GM12878 (cell line): ENCODE measurements at regions of chr1 and their contacts with region 1.

Region 1: DNA sequence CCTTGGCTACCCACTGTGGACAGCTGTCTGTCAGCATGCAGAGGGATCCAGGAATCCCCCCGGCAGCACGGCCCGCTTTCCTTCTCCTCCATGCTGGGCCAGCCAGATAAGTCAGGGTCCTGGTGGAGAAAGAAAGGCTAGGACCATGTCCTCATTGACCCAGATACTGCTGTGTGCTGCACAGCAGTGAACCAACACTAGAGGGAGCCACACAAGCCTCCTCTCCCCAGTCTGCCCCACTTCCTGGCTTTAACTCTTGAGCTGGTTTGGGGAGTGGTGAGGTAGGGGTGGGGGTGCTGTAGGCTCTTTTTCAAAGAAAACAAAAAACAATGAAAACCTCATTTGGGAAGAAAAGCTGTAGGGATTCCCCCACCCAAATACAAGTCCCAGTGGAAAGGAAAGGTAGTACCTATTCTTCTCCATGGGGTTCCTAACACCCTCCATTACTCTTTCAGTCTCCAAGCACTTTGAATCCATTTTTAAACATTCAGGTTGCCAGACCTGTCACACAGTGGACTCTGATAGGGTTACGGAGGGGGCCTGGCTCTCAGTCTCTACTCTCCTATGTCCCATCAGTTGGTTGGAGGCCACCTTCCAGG is 84.9 kb upstream of the CD1D start:
- DNase-seq: no peak
- ATAC-seq: peak; percentile 96
- H3K4me3 ChIP-seq: no peak overlapping the region
- H3K27ac ChIP-seq: no peak overlapping the region
- H3K4me1 ChIP-seq: no peaks in the 10 kb centered on the region
- H3K27me3 ChIP-seq: peaks cover 0 to 4% of the 10 kb centered on the region in 2 experiments; a peak in 3 of 4 replicates
- CTCF ChIP-seq: peak; percentile 52 to 81 (median 76)
- EP300 ChIP-seq: no peak
- POLR2A ChIP-seq: no peak
- RAD21 ChIP-seq: peak; percentile 57

Region 2: DNA sequence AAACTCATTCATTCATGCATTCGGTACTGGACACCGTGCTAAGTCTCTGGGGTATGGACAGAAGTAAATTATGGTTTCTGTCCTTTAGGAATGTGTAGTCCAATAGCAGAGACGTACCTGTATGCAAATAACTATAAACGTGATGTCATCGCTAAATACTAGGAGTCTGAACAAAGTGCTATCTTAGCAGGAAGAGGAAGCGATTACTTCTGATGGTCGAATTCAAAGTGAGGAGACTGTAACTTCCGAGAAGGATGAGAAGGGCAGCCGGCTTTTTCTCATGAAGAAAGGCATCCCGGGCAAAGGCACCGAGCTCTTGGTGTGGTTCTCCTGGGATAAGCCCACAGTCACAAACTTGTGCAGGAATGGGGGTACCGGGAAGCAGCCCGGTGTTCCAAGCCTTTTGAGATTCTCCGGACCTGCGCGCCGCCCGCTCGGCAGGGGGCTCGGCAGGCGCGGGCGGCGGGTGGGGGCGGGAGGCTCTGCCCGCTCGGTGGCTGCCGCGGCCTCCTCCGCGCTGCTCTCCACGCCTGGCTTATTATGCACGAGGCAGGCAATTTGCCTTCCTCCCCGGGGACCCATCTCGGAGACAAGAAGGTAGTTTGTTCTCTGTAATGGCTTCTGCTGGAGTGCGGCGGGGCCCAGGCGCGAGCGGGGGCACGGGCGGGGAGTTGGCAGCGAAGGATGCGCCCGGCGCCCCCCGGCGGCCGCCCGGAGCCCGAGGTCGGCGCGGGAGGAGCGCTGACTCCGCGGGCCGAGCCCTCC is 17.3 kb after region 1 on chr1:
- CTCF ChIA-PET with region 1: interaction called, 210 read pairs
- POLR2A ChIA-PET with region 1: no interaction called
- RAD21 ChIA-PET with region 1: interaction called, 4 read pairs
- SMC1A ChIA-PET with region 1: interaction called, 7 read pairs
- in situ Hi-C with region 1: no loop called
- intact Hi-C with region 1: no loop called
- DNase-seq: no peak
- ATAC-seq: peak; percentile 12; the same call in 1 of the 3 replicates
- H3K4me3 ChIP-seq: no peak overlapping the region
- H3K27ac ChIP-seq: no peak overlapping the region
- H3K4me1 ChIP-seq: no peaks in the 10 kb centered on the region
- H3K27me3 ChIP-seq: peaks cover 5 to 19% of the 10 kb centered on the region in 2 experiments
- CTCF ChIP-seq: no peak
- EP300 ChIP-seq: no peak
- POLR2A ChIP-seq: no peak
- RAD21 ChIP-seq: no peak

Region 3: DNA sequence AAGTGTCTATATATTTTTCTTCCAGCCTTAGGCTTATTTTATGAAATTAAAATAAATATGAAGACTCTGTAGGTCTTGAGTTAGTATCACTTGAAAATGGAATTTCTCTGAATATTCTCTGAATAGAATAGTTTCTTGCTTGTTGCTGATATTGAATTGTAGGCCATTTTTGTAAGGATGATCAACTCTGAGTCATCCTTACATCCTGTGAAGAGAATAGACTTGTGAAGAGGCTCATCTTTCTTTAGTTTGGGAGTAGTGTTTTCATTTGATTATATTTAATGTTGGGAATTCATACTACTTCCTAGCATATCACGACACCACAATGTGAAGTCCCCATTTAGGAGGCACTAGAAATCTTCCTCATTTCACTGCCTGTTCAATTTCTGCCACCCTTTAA is 57.3 kb after region 1 on chr1:
- CTCF ChIA-PET with region 1: no interaction called
- POLR2A ChIA-PET with region 1: no interaction called
- RAD21 ChIA-PET with region 1: no interaction called
- SMC1A ChIA-PET with region 1: no interaction called
- in situ Hi-C with region 1: no loop called
- intact Hi-C with region 1: no loop called
- DNase-seq: no peak
- ATAC-seq: no peak
- H3K4me3 ChIP-seq: no peak overlapping the region; the same call in 1 of the 2 replicates
- H3K27ac ChIP-seq: no peak overlapping the region
- H3K4me1 ChIP-seq: peaks cover 19% of the 10 kb centered on the region
- H3K27me3 ChIP-seq: no peaks in the 10 kb centered on the region
- CTCF ChIP-seq: no peak
- EP300 ChIP-seq: no peak
- POLR2A ChIP-seq: no peak
- RAD21 ChIP-seq: no peak

Region 4: GRCh38 chr1:158353303-158354075 is 257.7 kb after region 1 on chr1 and contains the start of gene CD1E:
- CTCF ChIA-PET with region 1: no interaction called
- POLR2A ChIA-PET with region 1: no interaction called
- RAD21 ChIA-PET with region 1: no interaction called
- SMC1A ChIA-PET with region 1: no interaction called
- in situ Hi-C with region 1: no loop called
- intact Hi-C with region 1: no loop called
- DNase-seq: no peak
- ATAC-seq: peak; percentile 62
- H3K4me3 ChIP-seq: no peak within 1 kb of the TSS
- H3K27ac ChIP-seq: no peak within 1 kb of the TSS
- H3K4me1 ChIP-seq: no peaks in the 10 kb centered on the region
- H3K27me3 ChIP-seq: no peaks in the 10 kb centered on the region; a peak in 1 of 4 replicates
- CTCF ChIP-seq: no peak
- EP300 ChIP-seq: no peak
- POLR2A ChIP-seq: no peak
- RAD21 ChIP-seq: no peak
- polyA plus RNA-seq, gene CD1E: 0.05 TPM in 1 of 2 experiments, not detected in the other